ENCODE measurements at regions of chr17 and their contacts with region 1.

Region 1: GRCh38 chr17:44911133-44912001 is 3.9 kb downstream of the GFAP start:
- DNase-seq: peak; percentile 36
- H3K4me3 Mint-ChIP-seq: no peak overlapping the region
- H3K27ac Mint-ChIP-seq: no peak overlapping the region
- H3K4me1 Mint-ChIP-seq: peaks cover 24% of the 10 kb centered on the region
- H3K27me3 Mint-ChIP-seq: no peaks in the 10 kb centered on the region
- CTCF ChIP-seq: no peak

Region 2: GRCh38 chr17:44887971-44888954 is 23.1 kb before region 1 on chr17:
- CTCF ChIA-PET with region 1: no interaction called
- POLR2A ChIA-PET with region 1: no interaction called
- intact Hi-C with region 1: no loop called
- DNase-seq: no peak
- H3K4me3 Mint-ChIP-seq: no peak overlapping the region
- H3K27ac Mint-ChIP-seq: no peak overlapping the region
- H3K4me1 Mint-ChIP-seq: no peaks in the 10 kb centered on the region
- H3K27me3 Mint-ChIP-seq: no peaks in the 10 kb centered on the region
- CTCF ChIP-seq: no peak

Region 3: GRCh38 chr17:44899069-44899782 is 12.1 kb before region 1 on chr17 and contains the start of gene EFTUD2:
- CTCF ChIA-PET with region 1: interaction called, 13 read pairs
- POLR2A ChIA-PET with region 1: interaction called, 21 read pairs
- intact Hi-C with region 1: no loop called
- DNase-seq: peak; percentile 87
- H3K4me3 Mint-ChIP-seq: peak within 1 kb of the TSS; percentile 80
- H3K27ac Mint-ChIP-seq: peak within 1 kb of the TSS; percentile 99
- H3K4me1 Mint-ChIP-seq: peaks cover 21% of the 10 kb centered on the region
- H3K27me3 Mint-ChIP-seq: no peaks in the 10 kb centered on the region
- CTCF ChIP-seq: no peak
- total RNA-seq, gene EFTUD2: 119 and 125 TPM in 2 replicates

Measured in MCF 10A (cell line).